Cardiac septum (tissue), 1 donor: ENCODE measurements at regions of chr11 and their contacts with region 1.

Region 1: GRCh38 chr11:122439911-122440810 is 215.4 kb upstream of the UBASH3B start:
- DNase-seq: no peak

Region 2: GRCh38 chr11:122215244-122215992 is 224.7 kb before region 1 on chr11:
- intact Hi-C with region 1: loop called (anchors 10 kb)
- DNase-seq: peak; percentile 86

Region 3: GRCh38 chr11:122317305-122317704 is 122.9 kb before region 1 on chr11:
- intact Hi-C with region 1: loop called (anchors 5 kb)
- DNase-seq: no peak